HEK293 (cell line): ENCODE measurements at regions of chr3 and their contacts with region 1.

Region 1: DNA sequence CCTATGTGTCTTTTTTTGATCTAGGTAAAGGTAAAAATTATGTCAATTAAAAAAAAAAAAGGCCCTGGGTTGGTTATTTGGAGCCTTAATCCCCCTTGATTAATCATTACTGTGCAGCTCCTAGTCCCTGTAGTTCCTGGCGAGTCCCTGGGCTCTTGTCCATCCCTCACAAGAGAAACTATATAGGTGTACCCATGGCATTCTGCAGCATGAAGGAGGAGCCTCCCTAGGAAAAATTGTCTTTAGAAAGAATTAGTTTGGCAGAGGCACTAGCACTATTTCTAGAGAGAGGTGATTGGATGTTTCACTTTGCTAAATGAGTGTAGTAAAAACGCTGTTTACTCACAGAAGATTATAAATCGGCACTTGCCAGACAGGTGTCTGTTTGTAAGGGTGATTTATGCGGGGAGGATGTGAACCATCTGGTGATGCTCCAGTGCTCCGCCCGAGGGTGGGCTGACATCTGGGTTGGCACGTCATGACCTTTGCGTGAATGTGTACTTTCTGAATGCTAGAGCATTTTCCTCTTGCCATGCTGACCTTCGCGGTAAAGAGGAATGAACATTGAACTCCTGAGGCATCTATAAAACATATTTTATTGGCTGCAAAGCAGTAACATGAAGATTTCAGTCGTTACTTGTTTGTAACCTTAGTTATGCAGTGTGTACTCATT is 12.6 kb downstream of the PLCL2 start:
- H3K4me3 ChIP-seq: no peak overlapping the region
- H3K27ac ChIP-seq: no peak overlapping the region; the same call in 1 of the 2 replicates
- H3K4me1 ChIP-seq: peaks cover 24% of the 10 kb centered on the region
- CTCF ChIP-seq: no peak

Region 2: GRCh38 chr3:17874632-17875031 is 977.2 kb after region 1 on chr3:
- CTCF ChIA-PET with region 1: no interaction called
- POLR2A ChIA-PET with region 1: interaction called, 10 read pairs
- H3K4me3 ChIP-seq: no peak overlapping the region
- H3K27ac ChIP-seq: no peak overlapping the region
- H3K4me1 ChIP-seq: no peaks in the 10 kb centered on the region
- CTCF ChIP-seq: no peak